Ascending aorta (tissue), 2 donors: ENCODE measurements at regions of chr3 and their contacts with region 1.

Region 1: GRCh38 chr3:13518516-13518953 is 30.4 kb upstream of the FBLN2 start:
- DNase-seq: peak; percentile 43 to 82
- H3K4me3 ChIP-seq: no peak overlapping the region
- H3K27ac ChIP-seq: peak overlapping the region; percentile 76 to 77
- H3K4me1 ChIP-seq: peaks cover 0 to 27% of the 10 kb centered on the region in 2 donors
- H3K27me3 ChIP-seq: no peaks in the 10 kb centered on the region
- CTCF ChIP-seq: no peak

Region 2: GRCh38 chr3:13559764-13560525 is 41.4 kb after region 1 on chr3:
- intact Hi-C with region 1: loop called (anchors 5 kb)
- DNase-seq: no peak
- H3K4me3 ChIP-seq: no peak overlapping the region
- H3K27ac ChIP-seq: peak overlapping the region; percentile 34 to 53
- H3K4me1 ChIP-seq: peaks cover 0 to 3% of the 10 kb centered on the region in 2 donors
- H3K27me3 ChIP-seq: no peaks in the 10 kb centered on the region
- CTCF ChIP-seq: no peak

Region 3: DNA sequence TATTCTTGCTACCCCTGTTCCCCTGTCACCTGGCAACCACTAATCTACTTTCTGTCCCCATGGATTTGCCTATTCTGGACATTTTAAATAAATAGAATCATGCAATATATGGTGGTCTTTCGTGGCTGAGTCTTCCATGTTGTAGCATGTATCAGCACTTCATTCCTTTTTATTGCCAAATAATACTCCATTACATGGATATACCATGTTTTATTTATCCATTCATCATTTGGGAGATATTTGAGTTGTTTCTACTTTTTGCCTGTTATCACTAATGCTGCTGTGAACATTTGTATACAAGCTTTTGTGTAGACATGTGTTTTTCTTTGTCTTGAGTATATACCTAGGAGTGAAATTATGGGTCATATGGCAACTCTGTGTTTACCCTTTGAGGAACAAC is 1479.4 kb after region 1 on chr3:
- intact Hi-C with region 1: no loop called
- DNase-seq: no peak
- H3K4me3 ChIP-seq: no peak overlapping the region
- H3K27ac ChIP-seq: no peak overlapping the region
- H3K4me1 ChIP-seq: no peaks in the 10 kb centered on the region
- H3K27me3 ChIP-seq: no peaks in the 10 kb centered on the region
- CTCF ChIP-seq: no peak